Dendritic cell treated with granulocyte-macrophage colony-stimulating factor and Interleukin-4, amounts not matched to agents 40 ng/mL and 50 ng/mL, for 4 days (primary cell): ENCODE measurements at regions of chr19 and their contacts with region 1.

Region 1: DNA sequence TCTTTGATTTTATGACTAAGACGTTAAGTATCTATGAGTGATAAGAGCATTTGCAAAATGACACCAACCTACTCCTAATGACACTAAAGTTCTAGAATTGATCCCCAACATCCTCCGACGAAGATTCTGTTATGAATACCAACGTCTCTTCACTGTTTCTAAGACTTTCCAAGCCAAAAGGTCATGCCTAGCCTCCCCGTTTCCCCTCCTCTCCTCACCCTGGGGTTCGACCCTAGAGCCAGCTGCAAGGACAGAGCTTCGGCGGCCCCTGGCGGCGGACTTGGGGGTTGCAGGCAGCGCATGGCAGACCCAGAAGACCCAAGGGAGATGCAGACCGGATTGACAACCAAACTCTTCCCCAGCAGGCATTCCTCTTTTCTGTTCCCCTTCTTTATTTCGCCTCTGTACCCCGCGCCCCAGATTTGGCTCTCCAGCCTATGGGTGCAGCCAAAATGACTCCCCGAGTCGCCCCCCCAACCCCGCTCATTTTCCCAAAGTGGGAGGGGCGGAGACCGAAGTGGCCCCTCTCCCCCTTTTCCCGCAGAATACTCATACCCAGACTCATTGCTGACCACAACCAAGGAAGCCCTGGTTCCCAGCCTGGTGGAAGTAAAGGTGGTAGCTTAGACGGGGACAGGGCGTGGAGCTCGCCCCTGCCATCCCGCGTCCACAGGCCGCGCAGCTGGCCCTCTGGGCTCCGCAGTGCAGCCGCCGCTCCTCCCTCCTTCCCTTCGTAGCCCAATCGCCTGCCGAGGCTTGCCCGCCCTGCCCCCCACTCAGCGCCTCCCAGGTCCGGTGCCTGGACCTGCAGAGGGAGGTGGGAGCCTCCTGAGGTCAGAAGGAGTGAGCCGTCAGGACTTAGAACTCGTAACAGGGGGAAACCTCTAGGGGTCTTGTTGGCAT is 4.1 kb upstream of the EML2 start:
- H3K4me3 Mint-ChIP-seq: peak overlapping the region; percentile 34
- H3K27ac Mint-ChIP-seq: peak overlapping the region; percentile 76
- H3K4me1 Mint-ChIP-seq: peaks cover 65% of the 10 kb centered on the region
- H3K27me3 Mint-ChIP-seq: peaks cover 47% of the 10 kb centered on the region

Region 2: GRCh38 chr19:45496349-45496953 is 146.8 kb before region 1 on chr19:
- intact Hi-C with region 1: loop called (anchors 10 kb)
- H3K4me3 Mint-ChIP-seq: peak overlapping the region; percentile 78
- H3K27ac Mint-ChIP-seq: peak overlapping the region; percentile 71
- H3K4me1 Mint-ChIP-seq: peaks cover 77% of the 10 kb centered on the region
- H3K27me3 Mint-ChIP-seq: peaks cover 53% of the 10 kb centered on the region

Region 3: GRCh38 chr19:45523642-45524256 is 119.5 kb before region 1 on chr19:
- intact Hi-C with region 1: loop called (anchors 10 kb)
- H3K4me3 Mint-ChIP-seq: no peak overlapping the region
- H3K27ac Mint-ChIP-seq: peak overlapping the region; percentile 47
- H3K4me1 Mint-ChIP-seq: peaks cover 76% of the 10 kb centered on the region
- H3K27me3 Mint-ChIP-seq: peaks cover 8% of the 10 kb centered on the region

Region 4: DNA sequence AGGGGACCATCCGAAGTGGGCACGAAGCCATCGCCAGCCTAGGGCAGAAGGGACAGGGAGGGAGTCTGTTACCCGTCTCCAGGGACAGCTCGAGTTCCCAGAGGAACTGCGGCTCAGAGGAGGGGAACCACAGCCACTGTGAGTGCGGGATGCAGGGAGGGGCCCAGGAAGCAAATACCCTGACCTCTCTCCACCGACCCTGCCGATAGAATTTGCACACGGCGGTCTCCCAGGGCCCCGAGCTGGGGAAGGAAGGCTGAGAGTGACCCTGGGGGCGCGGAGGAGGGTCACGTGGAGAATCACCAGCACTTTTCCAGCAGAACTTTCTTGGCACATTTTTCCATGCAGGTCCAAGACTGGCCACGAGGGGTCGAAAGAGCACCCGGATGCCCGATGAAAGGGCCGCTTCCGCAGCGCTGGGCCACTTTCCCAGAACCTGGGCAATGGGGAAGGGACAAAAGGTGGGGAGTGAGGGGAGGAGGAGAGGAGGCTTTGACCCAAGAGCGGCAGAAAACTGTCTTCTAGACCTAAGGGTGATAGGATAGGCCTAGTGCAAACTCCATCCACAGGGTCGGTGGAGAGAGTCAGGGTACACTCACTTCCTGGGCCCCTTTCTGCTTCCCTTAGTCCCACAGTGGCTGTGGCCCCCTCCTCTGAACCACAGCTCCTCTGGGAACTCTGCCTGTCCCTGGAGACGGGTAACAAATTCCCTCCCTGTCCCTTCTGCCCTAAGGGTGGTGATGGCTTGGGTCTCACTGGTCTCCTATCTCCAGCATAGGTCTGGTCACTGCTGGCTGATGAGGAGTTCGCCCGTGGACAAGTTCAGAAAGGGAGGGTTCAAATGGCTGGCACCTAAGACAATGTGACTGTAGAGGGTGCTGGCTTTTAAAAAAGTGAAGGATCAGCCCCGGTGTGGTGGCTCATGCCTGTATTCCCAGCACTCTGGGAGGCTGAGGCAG is 35.9 kb before region 1 on chr19:
- intact Hi-C with region 1: loop called (anchors 1 kb)
- H3K4me3 Mint-ChIP-seq: no peak overlapping the region
- H3K27ac Mint-ChIP-seq: peak overlapping the region; percentile 33
- H3K4me1 Mint-ChIP-seq: peaks cover 10% of the 10 kb centered on the region
- H3K27me3 Mint-ChIP-seq: peaks cover 23% of the 10 kb centered on the region